ENCODE measurements at regions of chr5 and their contacts with region 1.

Region 1: DNA sequence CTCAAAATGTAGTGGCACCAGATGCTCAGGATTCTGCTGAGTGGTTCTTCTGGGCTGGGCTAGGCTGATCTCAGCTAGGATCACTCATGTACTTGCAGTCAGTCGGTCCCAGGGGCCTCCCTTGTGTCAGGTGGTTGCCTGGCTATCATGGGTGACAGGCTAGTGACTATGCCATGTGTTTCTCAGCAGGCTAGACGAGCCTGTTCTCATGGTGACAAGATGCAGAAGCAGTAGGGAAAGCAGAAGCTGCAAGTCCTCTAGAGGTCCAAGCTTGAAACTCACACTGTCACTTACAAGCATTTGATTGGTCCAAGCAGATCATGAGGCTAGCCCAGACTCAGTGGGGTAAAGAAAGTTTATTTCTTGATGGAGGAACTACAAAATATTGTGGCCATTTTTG is 15.2 kb upstream of the KCNMB1 start:
- DNase-seq: no peak
- ATAC-seq: peak; percentile 81
- H3K4me3 ChIP-seq: no peak overlapping the region
- H3K27ac ChIP-seq: no peak overlapping the region
- H3K4me1 ChIP-seq: no peaks in the 10 kb centered on the region
- H3K27me3 ChIP-seq: no peaks in the 10 kb centered on the region; a peak in 2 of 4 replicates
- CTCF ChIP-seq: no peak
- EP300 ChIP-seq: no peak
- POLR2A ChIP-seq: no peak
- RAD21 ChIP-seq: no peak

Region 2: DNA sequence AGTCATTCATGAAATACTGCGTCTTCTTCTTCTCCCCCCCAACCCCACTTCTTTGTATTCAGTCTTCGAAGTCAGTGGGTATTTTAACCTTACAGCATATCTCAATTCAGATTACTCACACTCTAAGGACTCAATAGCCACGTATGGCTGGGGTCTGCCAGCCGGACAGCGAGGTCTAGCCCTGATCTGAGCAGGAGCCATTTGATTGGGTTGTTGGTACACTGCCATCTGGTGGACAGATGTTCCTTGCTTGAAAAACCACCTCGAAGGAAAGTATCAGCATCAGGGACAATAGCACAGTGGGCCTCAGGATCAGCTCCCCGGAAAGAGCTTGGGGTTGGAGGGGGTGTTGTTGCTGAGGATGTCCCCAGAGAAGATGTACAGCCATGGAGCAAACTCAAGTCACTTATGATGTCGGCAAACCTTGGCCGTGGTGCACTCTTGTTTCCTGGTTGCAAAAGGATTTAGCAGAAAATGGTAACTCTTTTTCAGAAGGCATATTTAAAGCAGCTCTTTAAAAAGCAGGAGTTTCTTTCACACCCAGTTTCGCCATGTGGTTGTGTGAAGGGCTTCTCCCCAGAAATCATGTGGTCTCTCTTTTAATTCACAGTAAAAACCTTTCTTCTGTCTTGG is 16.5 kb after region 1 on chr5:
- CTCF ChIA-PET with region 1: interaction called, 12 read pairs
- POLR2A ChIA-PET with region 1: no interaction called
- RAD21 ChIA-PET with region 1: interaction called, 5 read pairs
- SMC1A ChIA-PET with region 1: interaction called, 6 read pairs
- in situ Hi-C with region 1: no loop called
- intact Hi-C with region 1: no loop called
- DNase-seq: no peak
- ATAC-seq: peak; percentile 92
- H3K4me3 ChIP-seq: no peak overlapping the region
- H3K27ac ChIP-seq: no peak overlapping the region
- H3K4me1 ChIP-seq: no peaks in the 10 kb centered on the region
- H3K27me3 ChIP-seq: no peaks in the 10 kb centered on the region; a peak in 1 of 4 replicates
- CTCF ChIP-seq: peak; percentile 65 to 73 (median 68)
- EP300 ChIP-seq: no peak
- POLR2A ChIP-seq: no peak
- RAD21 ChIP-seq: peak; percentile 76

Region 3: GRCh38 chr5:170429014-170429413 is 24.6 kb after region 1 on chr5:
- CTCF ChIA-PET with region 1: interaction called, 10 read pairs
- POLR2A ChIA-PET with region 1: no interaction called
- RAD21 ChIA-PET with region 1: no interaction called
- SMC1A ChIA-PET with region 1: interaction called, 6 read pairs
- in situ Hi-C with region 1: no loop called
- intact Hi-C with region 1: no loop called
- DNase-seq: no peak
- ATAC-seq: no peak
- H3K4me3 ChIP-seq: no peak overlapping the region
- H3K27ac ChIP-seq: no peak overlapping the region
- H3K4me1 ChIP-seq: no peaks in the 10 kb centered on the region
- H3K27me3 ChIP-seq: peaks cover 0 to 2% of the 10 kb centered on the region in 2 experiments; a peak in 2 of 4 replicates
- CTCF ChIP-seq: no peak
- EP300 ChIP-seq: no peak
- POLR2A ChIP-seq: no peak
- RAD21 ChIP-seq: no peak

Region 4: GRCh38 chr5:170603578-170604565 is 199.5 kb after region 1 on chr5:
- CTCF ChIA-PET with region 1: no interaction called
- POLR2A ChIA-PET with region 1: no interaction called
- RAD21 ChIA-PET with region 1: no interaction called
- SMC1A ChIA-PET with region 1: no interaction called
- in situ Hi-C with region 1: no loop called
- intact Hi-C with region 1: no loop called
- DNase-seq: no peak
- ATAC-seq: peak; percentile 87
- H3K4me3 ChIP-seq: no peak overlapping the region
- H3K27ac ChIP-seq: no peak overlapping the region
- H3K4me1 ChIP-seq: no peaks in the 10 kb centered on the region
- H3K27me3 ChIP-seq: peaks cover 0 to 4% of the 10 kb centered on the region in 2 experiments; a peak in 2 of 4 replicates
- CTCF ChIP-seq: peak; percentile 56 to 70 (median 65)
- EP300 ChIP-seq: no peak
- POLR2A ChIP-seq: no peak
- RAD21 ChIP-seq: peak; percentile 55

Measured in GM12878 (cell line).